Vagina (tissue), 2 donors: ENCODE measurements at regions of chr3 and their contacts with region 1.

Region 1: GRCh38 chr3:71172951-71173350 is 410.6 kb downstream of the FOXP1 start:
- DNase-seq: no peak
- H3K4me3 ChIP-seq: no peak overlapping the region
- H3K27ac ChIP-seq: no peak overlapping the region
- H3K4me1 ChIP-seq: no peaks in the 10 kb centered on the region
- H3K27me3 ChIP-seq: no peaks in the 10 kb centered on the region
- CTCF ChIP-seq: no peak
- POLR2A ChIP-seq: no peak

Region 2: GRCh38 chr3:71210257-71211007 is 37.5 kb after region 1 on chr3:
- intact Hi-C with region 1: loop called (anchors 1 kb)
- DNase-seq: no peak
- H3K4me3 ChIP-seq: no peak overlapping the region
- H3K27ac ChIP-seq: peak overlapping the region; percentile 7
- H3K4me1 ChIP-seq: peaks cover 29% of the 10 kb centered on the region
- H3K27me3 ChIP-seq: no peaks in the 10 kb centered on the region
- CTCF ChIP-seq: peak in 1 of 3 experiments; percentile 17
- POLR2A ChIP-seq: no peak